ENCODE measurements at regions of chr11 and their contacts with region 1.

Region 1: DNA sequence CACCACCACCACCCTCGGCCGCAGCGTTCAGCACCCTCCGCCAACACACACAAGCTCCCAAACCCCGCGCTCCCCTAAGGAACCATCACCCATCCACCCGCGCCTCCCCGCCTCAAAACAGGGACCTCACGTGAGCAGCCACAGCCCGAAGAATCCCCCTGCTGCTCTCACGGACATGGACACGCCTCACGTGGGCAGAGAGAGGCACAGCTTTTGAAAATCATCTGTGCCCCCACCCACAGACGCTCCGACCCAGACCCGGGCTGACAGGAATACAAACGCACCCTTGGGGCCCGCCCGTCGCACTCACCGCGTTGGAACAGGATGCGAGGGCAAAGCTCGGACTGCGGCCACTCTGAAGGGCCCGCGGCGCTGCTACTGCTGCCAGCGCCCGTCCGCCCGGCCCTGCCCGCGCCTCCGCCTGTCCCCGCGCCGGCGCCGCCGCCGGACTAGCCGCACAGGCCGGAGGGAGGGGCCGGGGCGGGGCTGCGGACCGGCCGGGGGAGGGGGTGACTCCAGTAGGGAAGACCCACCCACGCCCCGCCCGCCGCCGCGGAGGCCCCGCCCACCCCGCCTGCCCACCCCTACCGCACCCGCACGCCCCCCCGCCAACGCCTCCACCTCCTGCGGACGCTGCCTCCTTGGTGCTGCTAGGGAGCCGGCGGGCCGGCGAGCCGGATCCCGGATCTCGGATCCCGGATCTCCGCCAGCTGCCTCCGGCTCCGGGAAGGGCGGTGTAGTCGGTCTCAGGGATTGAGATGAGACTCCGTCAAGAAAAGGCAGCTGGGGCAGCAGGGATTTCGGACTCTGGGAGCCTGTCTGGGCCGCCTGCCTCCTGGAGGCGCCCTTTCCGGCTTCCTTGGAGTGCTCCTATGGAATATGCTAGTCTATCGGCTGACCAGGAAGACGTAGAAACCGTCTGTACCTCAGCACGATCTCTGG is at the start of gene TRIM3:
- DNase-seq: peak; percentile 46 to 88
- H3K4me3 ChIP-seq: peak within 1 kb of the TSS; percentile 73 to 97 (median 80)
- H3K27ac ChIP-seq: no peak within 1 kb of the TSS; the same call in 1 of the 2 replicates
- H3K4me1 ChIP-seq: peaks cover 9 to 20% (median 15%) of the 10 kb centered on the region in 4 experiments
- H3K27me3 ChIP-seq: no peaks in the 10 kb centered on the region; a peak in 1 of 7 replicates
- CTCF ChIP-seq: peak; percentile 9 to 19 (median 19); a peak in 3 of 4 replicates
- EP300 ChIP-seq: 0 out of 3 replicates have a peak, but pooled peaks of 1 of the 2 experiments have one; percentile 6
- POLR2A ChIP-seq: 0 out of 3 replicates have a peak, but pooled peaks of 1 of the 2 experiments have one; percentile 21
- RAD21 ChIP-seq: no peak; a peak in 1 of 4 replicates
- total RNA-seq, gene TRIM3: 14.3 and 15.7 TPM in 2 replicates

Region 2: DNA sequence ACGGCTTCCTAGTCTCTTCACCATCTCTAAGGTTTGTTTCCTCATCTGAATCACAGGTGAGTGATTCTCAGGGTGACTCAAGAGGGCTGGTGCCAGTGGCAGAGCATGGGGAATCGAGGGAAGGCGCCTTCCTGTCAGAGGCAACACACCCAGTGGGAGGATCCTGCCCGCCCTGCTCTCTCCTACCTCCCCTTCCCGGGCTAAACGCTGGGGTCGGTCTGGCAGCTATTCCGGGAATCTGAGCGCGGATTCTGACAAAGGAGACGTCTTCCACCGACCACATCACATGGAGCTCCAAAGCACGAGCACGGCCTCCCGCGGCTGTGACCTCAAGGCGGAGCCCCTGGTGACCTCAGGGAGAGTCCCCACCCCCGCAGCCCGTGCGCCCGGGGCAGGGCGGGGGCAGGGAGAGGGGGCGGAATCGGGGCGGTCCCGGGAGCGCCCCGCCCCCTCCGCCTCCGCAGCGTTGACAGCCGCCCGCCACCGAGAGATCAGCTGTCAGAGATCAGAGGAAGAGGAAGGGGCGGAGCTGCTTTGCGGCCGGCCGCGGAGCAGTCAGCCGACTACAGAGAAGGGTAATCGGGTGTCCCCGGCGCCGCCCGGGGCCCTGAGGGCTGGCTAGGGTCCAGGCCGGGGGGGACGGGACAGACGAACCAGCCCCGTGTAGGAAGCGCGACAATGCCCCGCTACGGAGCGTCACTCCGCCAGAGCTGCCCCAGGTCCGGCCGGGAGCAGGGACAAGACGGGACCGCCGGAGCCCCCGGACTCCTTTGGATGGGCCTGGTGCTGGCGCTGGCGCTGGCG is 83.6 kb before region 1 on chr11 and contains the start of gene SMPD1:
- CTCF ChIA-PET with region 1: interaction called, 10 read pairs
- POLR2A ChIA-PET with region 1: interaction called, 4 read pairs
- DNase-seq: peak; percentile 57 to 88
- H3K4me3 ChIP-seq: peak within 1 kb of the TSS; percentile 51 to 78 (median 62)
- H3K27ac ChIP-seq: no peak within 1 kb of the TSS; the same call in 1 of the 2 replicates
- H3K4me1 ChIP-seq: peaks cover 0 to 12% (median 9%) of the 10 kb centered on the region in 4 experiments; a peak in 6 of 7 replicates
- H3K27me3 ChIP-seq: peaks cover 2 to 8% (median 4%) of the 10 kb centered on the region in 4 experiments
- CTCF ChIP-seq: no peak
- EP300 ChIP-seq: no peak
- POLR2A ChIP-seq: 0 out of 3 replicates have a peak, but pooled peaks of 1 of the 2 experiments have one; percentile 26
- RAD21 ChIP-seq: no peak; a peak in 1 of 4 replicates
- total RNA-seq, gene SMPD1: 1.9 and 3.1 TPM in 2 replicates

Region 3: DNA sequence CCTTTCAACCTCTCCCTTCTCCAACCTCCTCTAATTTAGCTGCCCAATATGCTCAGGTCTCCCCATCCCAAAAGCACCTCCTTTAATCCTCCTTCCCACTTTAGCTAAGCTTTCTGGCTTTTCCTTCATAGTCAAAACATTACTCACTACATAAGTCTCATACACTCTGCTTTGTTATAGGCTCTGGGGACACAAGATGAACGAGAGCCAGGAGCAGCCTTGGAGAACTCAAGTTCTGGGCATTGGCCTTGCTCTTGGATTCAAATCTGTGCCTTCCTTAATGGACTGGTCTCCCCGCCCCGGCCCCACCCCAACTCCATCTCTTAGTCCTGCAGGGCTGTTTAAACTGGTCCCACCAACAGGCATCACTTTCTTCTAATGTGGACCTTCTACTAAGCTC is 21.5 kb before region 1 on chr11:
- CTCF ChIA-PET with region 1: interaction called, 69 read pairs
- POLR2A ChIA-PET with region 1: interaction called, 12 read pairs
- DNase-seq: no peak
- H3K4me3 ChIP-seq: no peak overlapping the region
- H3K27ac ChIP-seq: no peak overlapping the region
- H3K4me1 ChIP-seq: no peaks in the 10 kb centered on the region
- H3K27me3 ChIP-seq: no peaks in the 10 kb centered on the region
- CTCF ChIP-seq: no peak
- EP300 ChIP-seq: no peak
- POLR2A ChIP-seq: no peak
- RAD21 ChIP-seq: no peak

Region 4: GRCh38 chr11:6488342-6488741 is 14.6 kb after region 1 on chr11:
- CTCF ChIA-PET with region 1: interaction called, 3 read pairs
- POLR2A ChIA-PET with region 1: interaction called, 12 read pairs
- DNase-seq: no peak
- H3K4me3 ChIP-seq: no peak overlapping the region
- H3K27ac ChIP-seq: no peak overlapping the region
- H3K4me1 ChIP-seq: no peaks in the 10 kb centered on the region
- H3K27me3 ChIP-seq: no peaks in the 10 kb centered on the region
- CTCF ChIP-seq: no peak
- EP300 ChIP-seq: no peak
- POLR2A ChIP-seq: no peak
- RAD21 ChIP-seq: no peak

Region 5: GRCh38 chr11:6498121-6498520 is 24.4 kb after region 1 on chr11:
- CTCF ChIA-PET with region 1: interaction called, 15 read pairs
- POLR2A ChIA-PET with region 1: interaction called, 13 read pairs
- DNase-seq: no peak
- H3K4me3 ChIP-seq: no peak overlapping the region
- H3K27ac ChIP-seq: no peak overlapping the region
- H3K4me1 ChIP-seq: peaks cover 0 to 6% (median 1%) of the 10 kb centered on the region in 4 experiments; a peak in 4 of 7 replicates
- H3K27me3 ChIP-seq: no peaks in the 10 kb centered on the region
- CTCF ChIP-seq: no peak
- EP300 ChIP-seq: no peak
- POLR2A ChIP-seq: no peak
- RAD21 ChIP-seq: no peak

Region 6: GRCh38 chr11:6505577-6506240 is 32.0 kb after region 1 on chr11:
- CTCF ChIA-PET with region 1: interaction called, 10 read pairs
- POLR2A ChIA-PET with region 1: no interaction called
- DNase-seq: no peak
- H3K4me3 ChIP-seq: no peak overlapping the region
- H3K27ac ChIP-seq: no peak overlapping the region
- H3K4me1 ChIP-seq: no peaks in the 10 kb centered on the region
- H3K27me3 ChIP-seq: no peaks in the 10 kb centered on the region
- CTCF ChIP-seq: peak in 2 of 3 experiments; percentile 46 to 86; a peak in 2 of 4 replicates
- EP300 ChIP-seq: no peak
- POLR2A ChIP-seq: no peak
- RAD21 ChIP-seq: peak; percentile 51 to 63

Measured in H1 (cell line).